Left ventricle myocardium inferior (tissue), 1 donor: ENCODE measurements at regions of chr6 and their contacts with region 1.

Region 1: GRCh38 chr6:8212720-8213434 is 110.5 kb upstream of the EEF1E1 start:
- DNase-seq: no peak
- H3K4me3 ChIP-seq: no peak overlapping the region
- H3K27ac ChIP-seq: no peak overlapping the region
- H3K4me1 ChIP-seq: no peaks in the 10 kb centered on the region
- H3K27me3 ChIP-seq: peaks cover 43% of the 10 kb centered on the region
- CTCF ChIP-seq: no peak

Region 2: GRCh38 chr6:8131256-8131897 is 81.5 kb before region 1 on chr6:
- intact Hi-C with region 1: loop called (anchors 5 kb)
- DNase-seq: no peak
- H3K4me3 ChIP-seq: no peak overlapping the region
- H3K27ac ChIP-seq: no peak overlapping the region
- H3K4me1 ChIP-seq: no peaks in the 10 kb centered on the region
- H3K27me3 ChIP-seq: peaks cover 56% of the 10 kb centered on the region
- CTCF ChIP-seq: peak; percentile 61